GM12878 (cell line): ENCODE measurements at regions of chr5 and their contacts with region 1.

Region 1: DNA sequence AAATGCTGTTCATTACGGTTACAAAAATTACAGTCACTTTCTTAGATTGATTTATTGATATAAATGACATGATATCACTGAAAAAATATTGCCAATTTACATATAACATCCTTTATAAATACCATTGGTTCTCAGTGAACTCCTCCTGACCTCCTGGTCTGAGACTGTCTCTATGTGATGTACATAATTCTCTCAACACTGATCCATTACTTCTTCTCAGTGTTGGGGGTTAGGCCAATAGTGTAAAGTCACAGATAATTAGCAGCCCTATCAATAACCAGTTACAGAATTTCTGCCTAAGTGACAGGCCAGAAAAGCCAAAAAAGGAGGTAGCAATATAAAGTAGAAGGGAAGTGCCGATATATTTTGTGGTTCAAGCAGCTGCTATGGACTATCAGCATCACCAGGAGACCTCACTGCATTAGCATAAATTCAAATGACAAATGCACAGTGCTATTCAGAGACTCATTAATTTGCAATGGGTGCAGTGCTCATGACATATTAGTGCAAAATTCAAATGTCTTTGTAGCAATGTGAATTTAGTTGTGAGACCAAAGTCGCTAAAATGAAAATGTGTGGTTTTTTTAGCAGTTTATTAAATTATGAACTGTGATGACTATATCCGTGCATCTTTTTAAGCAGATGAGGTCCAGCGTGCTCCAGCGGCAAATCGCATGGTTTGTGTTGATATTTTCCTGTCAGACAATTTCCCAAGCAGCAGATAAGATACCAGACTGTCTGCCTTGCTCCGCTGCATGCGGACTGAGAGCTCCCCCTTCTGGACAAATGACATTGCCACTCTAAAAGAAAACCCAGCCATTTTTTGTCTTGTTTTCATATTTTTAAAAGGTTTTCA is 144.6 kb downstream of the CETN3 start:
- DNase-seq: peak; percentile 41
- ATAC-seq: peak; percentile 88
- H3K4me3 ChIP-seq: peak overlapping the region; percentile 26; the same call in 1 of the 2 replicates
- H3K27ac ChIP-seq: no peak overlapping the region
- H3K4me1 ChIP-seq: peaks cover 5% of the 10 kb centered on the region
- H3K27me3 ChIP-seq: no peaks in the 10 kb centered on the region
- CTCF ChIP-seq: peak; percentile 89 to 96 (median 92)
- EP300 ChIP-seq: no peak
- POLR2A ChIP-seq: no peak
- RAD21 ChIP-seq: peak; percentile 99

Region 2: DNA sequence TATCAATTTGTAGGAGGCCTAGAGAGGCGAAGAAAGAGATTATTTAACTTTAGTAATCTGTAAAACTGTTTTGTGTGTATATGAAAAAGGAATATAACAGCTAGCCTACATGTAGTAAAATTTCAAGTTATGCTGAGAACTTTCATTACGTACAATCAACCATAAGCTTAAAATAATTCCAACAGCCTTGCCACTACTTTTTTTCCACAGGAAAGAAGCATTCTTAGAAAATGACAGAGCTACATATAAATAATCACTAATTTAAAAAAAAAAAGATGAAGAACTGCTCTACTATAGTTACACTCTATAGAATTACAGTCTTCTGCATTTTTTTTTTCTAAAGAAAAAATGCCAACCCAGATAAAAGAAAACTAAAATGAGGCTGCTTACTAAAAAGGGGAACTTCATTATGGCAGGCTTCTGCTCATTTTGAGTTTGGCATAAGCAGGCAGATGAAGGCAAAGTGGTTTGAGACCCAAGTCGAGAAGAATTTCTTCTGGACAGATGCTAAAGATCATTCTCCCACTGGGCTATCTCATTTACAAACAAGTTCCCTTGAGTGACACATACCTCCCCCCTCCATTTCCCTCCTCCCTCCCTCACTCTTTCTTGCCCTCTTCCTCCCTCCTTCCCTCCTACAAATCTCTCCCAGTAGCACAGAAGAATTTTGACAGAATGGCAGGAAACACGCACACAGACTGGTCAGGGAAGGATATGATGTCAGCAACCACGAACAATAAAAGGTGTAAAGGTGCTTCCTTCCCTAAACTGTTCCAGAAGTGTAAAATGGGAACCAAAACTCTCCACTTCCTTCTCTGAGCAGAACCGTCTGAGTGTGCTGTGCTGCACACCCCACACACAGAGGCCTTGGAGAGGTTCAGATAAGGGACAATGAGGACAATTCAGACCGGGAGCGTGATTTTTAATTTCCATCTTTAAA is 1438.0 kb before region 1 on chr5:
- CTCF ChIA-PET with region 1: no interaction called
- POLR2A ChIA-PET with region 1: no interaction called
- RAD21 ChIA-PET with region 1: no interaction called
- SMC1A ChIA-PET with region 1: interaction called, 3 read pairs
- in situ Hi-C with region 1: no loop called
- intact Hi-C with region 1: loop called (anchors 10 kb)
- DNase-seq: peak; percentile 98
- ATAC-seq: peak; percentile 63
- H3K4me3 ChIP-seq: peak overlapping the region; percentile 64; the same call in 1 of the 2 replicates
- H3K27ac ChIP-seq: peak overlapping the region; percentile 80
- H3K4me1 ChIP-seq: peaks cover 23% of the 10 kb centered on the region
- H3K27me3 ChIP-seq: no peaks in the 10 kb centered on the region
- CTCF ChIP-seq: no peak
- EP300 ChIP-seq: peak; percentile 95 to 96
- POLR2A ChIP-seq: peak; percentile 52; the same call in 1 of the 2 replicates
- RAD21 ChIP-seq: no peak

Region 3: GRCh38 chr5:89071101-89071940 is 1193.6 kb before region 1 on chr5:
- CTCF ChIA-PET with region 1: no interaction called
- POLR2A ChIA-PET with region 1: no interaction called
- RAD21 ChIA-PET with region 1: no interaction called
- SMC1A ChIA-PET with region 1: no interaction called
- in situ Hi-C with region 1: no loop called
- intact Hi-C with region 1: loop called (anchors 10 kb)
- DNase-seq: peak; percentile 33
- ATAC-seq: peak; percentile 92
- H3K4me3 ChIP-seq: peak overlapping the region; percentile 58
- H3K27ac ChIP-seq: peak overlapping the region; percentile 92
- H3K4me1 ChIP-seq: peaks cover 14% of the 10 kb centered on the region
- H3K27me3 ChIP-seq: no peaks in the 10 kb centered on the region
- CTCF ChIP-seq: no peak
- EP300 ChIP-seq: peak; percentile 52 to 66; a peak in 2 of 4 replicates
- POLR2A ChIP-seq: no peak
- RAD21 ChIP-seq: 0 out of 2 replicates have a peak, but pooled peaks have one; percentile 2

Region 4: GRCh38 chr5:89930591-89931392 is 334.1 kb before region 1 on chr5:
- CTCF ChIA-PET with region 1: interaction called, 7 read pairs
- POLR2A ChIA-PET with region 1: interaction called, 3 read pairs
- RAD21 ChIA-PET with region 1: no interaction called
- SMC1A ChIA-PET with region 1: interaction called, 3 read pairs
- in situ Hi-C with region 1: no loop called
- intact Hi-C with region 1: loop called (anchors 10 kb)
- DNase-seq: peak; percentile 59
- ATAC-seq: peak; percentile 91
- H3K4me3 ChIP-seq: peak overlapping the region; percentile 4; the same call in 1 of the 2 replicates
- H3K27ac ChIP-seq: peak overlapping the region; percentile 70
- H3K4me1 ChIP-seq: peaks cover 12% of the 10 kb centered on the region; the same call in 1 of the 2 replicates
- H3K27me3 ChIP-seq: no peaks in the 10 kb centered on the region
- CTCF ChIP-seq: no peak
- EP300 ChIP-seq: peak; percentile 67 to 71; a peak in 2 of 4 replicates
- POLR2A ChIP-seq: no peak
- RAD21 ChIP-seq: peak; percentile 17; the same call in 1 of the 2 replicates

Region 5: DNA sequence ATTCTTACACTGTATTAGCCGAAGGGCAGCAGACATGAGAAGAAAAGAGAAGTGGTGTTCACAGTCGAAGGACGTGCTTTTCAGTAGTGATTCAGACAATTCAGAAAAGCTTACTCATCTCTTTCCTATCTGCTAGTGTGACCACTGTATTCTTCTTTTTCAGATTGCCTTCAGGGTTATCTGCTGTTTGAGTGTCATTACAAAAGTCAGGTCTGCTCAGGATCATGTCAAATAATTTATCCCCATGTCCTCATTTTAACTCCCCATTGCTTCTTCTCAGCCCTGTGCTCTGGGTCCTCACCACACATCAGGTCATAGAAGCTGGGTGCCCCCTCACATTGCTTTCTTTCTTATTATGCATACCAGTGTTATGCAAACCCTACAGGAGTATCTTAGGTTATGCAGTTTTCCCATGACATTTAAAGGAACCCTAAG is 249.3 kb before region 1 on chr5:
- CTCF ChIA-PET with region 1: no interaction called
- POLR2A ChIA-PET with region 1: no interaction called
- RAD21 ChIA-PET with region 1: no interaction called
- SMC1A ChIA-PET with region 1: no interaction called
- in situ Hi-C with region 1: no loop called
- intact Hi-C with region 1: loop called (anchors 5 kb)
- DNase-seq: peak; percentile 82
- ATAC-seq: peak; percentile 96
- H3K4me3 ChIP-seq: no peak overlapping the region
- H3K27ac ChIP-seq: peak overlapping the region; percentile 7
- H3K4me1 ChIP-seq: peaks cover 28% of the 10 kb centered on the region
- H3K27me3 ChIP-seq: no peaks in the 10 kb centered on the region
- CTCF ChIP-seq: 0 out of 6 replicates have a peak, but pooled peaks of 1 of the 3 experiments have one; percentile 4
- EP300 ChIP-seq: peak; percentile 50 to 73
- POLR2A ChIP-seq: no peak
- RAD21 ChIP-seq: no peak

Region 6: GRCh38 chr5:90233476-90233875 is 31.4 kb before region 1 on chr5:
- CTCF ChIA-PET with region 1: no interaction called
- POLR2A ChIA-PET with region 1: no interaction called
- RAD21 ChIA-PET with region 1: no interaction called
- SMC1A ChIA-PET with region 1: no interaction called
- in situ Hi-C with region 1: no loop called
- intact Hi-C with region 1: no loop called
- DNase-seq: no peak
- ATAC-seq: no peak
- H3K4me3 ChIP-seq: no peak overlapping the region
- H3K27ac ChIP-seq: no peak overlapping the region
- H3K4me1 ChIP-seq: no peaks in the 10 kb centered on the region
- H3K27me3 ChIP-seq: no peaks in the 10 kb centered on the region
- CTCF ChIP-seq: no peak
- EP300 ChIP-seq: no peak
- POLR2A ChIP-seq: no peak
- RAD21 ChIP-seq: no peak

Region 7: DNA sequence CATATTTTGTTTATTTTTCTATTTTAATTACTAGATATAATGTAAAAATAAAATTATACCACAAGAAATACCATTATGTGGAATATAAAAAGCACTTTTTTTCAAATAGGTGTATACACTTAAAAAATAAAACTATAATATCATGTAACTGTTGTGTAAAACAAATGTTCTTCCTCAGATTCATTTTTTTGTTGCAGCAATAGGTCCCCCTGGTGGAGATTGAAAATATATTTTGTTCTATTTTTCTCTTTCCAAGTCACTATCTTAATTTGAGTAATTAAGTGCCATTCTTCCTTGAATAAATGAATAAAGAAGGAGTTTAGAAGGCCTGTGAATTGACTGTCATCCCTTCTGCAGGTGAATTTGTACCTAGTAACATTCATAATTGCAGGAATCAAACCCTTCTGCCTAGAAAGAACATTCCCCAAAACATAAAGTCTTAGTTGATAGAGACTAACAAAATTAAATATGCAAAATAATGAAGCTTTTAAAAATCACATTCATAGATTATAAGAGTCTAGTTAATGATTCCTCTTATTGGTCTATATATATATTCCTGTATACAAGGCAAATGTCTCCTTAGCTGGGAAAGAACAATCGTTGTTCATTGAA is 121.3 kb after region 1 on chr5:
- CTCF ChIA-PET with region 1: interaction called, 24 read pairs
- POLR2A ChIA-PET with region 1: no interaction called
- RAD21 ChIA-PET with region 1: interaction called, 9 read pairs
- SMC1A ChIA-PET with region 1: interaction called, 8 read pairs
- in situ Hi-C with region 1: loop called (anchors 10 kb)
- intact Hi-C with region 1: loop called (anchors 2 kb)
- DNase-seq: no peak
- ATAC-seq: peak; percentile 48; the same call in 1 of the 3 replicates
- H3K4me3 ChIP-seq: no peak overlapping the region
- H3K27ac ChIP-seq: no peak overlapping the region
- H3K4me1 ChIP-seq: no peaks in the 10 kb centered on the region
- H3K27me3 ChIP-seq: no peaks in the 10 kb centered on the region
- CTCF ChIP-seq: peak in 2 of 3 experiments; percentile 30; a peak in 3 of 6 replicates
- EP300 ChIP-seq: no peak
- POLR2A ChIP-seq: no peak
- RAD21 ChIP-seq: peak; percentile 72